Mammary epithelial cell (primary cell): ENCODE measurements at regions of chrX and their contacts with region 1.

Region 1: DNA sequence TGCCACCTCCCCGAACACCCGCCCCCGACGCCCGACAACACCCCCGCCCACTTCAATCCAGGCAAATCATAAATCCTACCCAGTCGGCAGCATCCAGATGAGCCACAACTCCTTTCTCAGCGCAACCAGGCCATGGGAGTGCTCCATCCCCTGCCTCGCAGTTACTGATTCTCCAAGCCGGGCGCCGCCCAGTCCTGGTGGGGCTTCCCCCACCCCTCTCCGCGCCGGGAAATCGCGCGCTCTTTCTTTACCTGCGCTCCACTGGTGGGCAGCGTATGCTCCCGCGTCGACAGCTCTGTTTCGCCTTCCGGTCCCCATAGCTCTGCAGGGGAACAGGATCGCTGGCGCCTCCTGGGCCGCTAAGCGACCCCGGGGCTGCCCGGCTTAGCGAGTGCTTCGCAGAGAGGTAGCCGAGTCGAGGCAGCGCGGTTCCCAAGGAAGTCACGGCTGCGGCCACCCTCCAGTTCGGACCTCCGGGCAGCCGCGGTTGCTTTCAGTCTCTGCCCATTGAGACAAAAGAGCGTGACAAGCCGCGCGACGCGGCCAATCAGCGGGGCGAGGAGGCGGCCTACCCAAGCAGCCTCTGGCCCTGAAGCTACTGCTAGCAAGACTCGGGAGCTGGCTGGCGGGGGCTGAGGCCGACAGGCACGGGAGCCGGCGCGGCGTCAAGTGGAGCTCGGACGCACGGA is 43.7 kb upstream of the TMSB15B start:
- DNase-seq: peak; percentile 66
- H3K4me3 ChIP-seq: peak overlapping the region; percentile 65 to 69 (median 66)
- H3K27ac ChIP-seq: peak overlapping the region; percentile 54
- H3K4me1 ChIP-seq: peaks cover 3% of the 10 kb centered on the region
- H3K27me3 ChIP-seq: no peaks in the 10 kb centered on the region
- CTCF ChIP-seq: no peak

Region 2: DNA sequence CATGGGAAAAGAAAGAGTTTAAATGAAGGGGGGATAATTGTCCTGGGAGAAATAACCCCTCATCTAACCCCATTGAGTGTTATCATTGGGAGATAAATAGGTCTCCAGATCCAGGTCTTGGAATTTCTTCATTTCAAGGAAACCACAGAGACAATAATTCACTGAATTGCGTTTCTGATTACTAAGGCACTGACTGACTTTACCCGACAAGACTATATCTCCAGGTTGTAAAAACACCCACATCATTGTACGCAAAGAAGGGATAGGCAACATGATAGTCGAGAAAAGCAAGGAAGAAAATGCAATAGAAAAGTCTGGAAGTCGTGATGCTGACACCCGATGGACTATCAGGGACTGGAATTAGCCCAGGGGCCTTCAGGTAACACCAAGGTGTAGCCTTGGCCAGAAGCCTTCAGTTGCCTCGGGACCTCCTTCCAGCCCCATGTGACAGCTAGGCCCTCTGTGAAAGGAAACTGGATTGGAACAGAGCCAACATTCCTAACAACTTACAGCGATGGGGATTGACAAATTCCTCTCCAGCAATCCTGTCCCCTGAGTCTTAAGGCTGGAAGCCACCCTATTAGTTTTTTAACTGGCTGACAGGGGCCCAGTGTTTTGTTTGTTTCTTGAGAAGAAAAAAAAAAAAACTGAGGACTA is 40.1 kb before region 1 on chrX:
- CTCF ChIA-PET with region 1: no interaction called
- dilution Hi-C with region 1: no loop called
- in situ Hi-C with region 1: no loop called
- intact Hi-C with region 1: loop called (anchors 2 kb)
- DNase-seq: peak; percentile 77
- H3K4me3 ChIP-seq: no peak overlapping the region
- H3K27ac ChIP-seq: no peak overlapping the region
- H3K4me1 ChIP-seq: peaks cover 12% of the 10 kb centered on the region
- H3K27me3 ChIP-seq: no peaks in the 10 kb centered on the region
- CTCF ChIP-seq: no peak

Region 3: GRCh38 chrX:103941201-103941975 is 22.7 kb after region 1 on chrX:
- CTCF ChIA-PET with region 1: no interaction called
- dilution Hi-C with region 1: no loop called
- in situ Hi-C with region 1: no loop called
- intact Hi-C with region 1: loop called (anchors 1 kb)
- DNase-seq: peak; percentile 35
- H3K4me3 ChIP-seq: no peak overlapping the region
- H3K27ac ChIP-seq: no peak overlapping the region
- H3K4me1 ChIP-seq: no peaks in the 10 kb centered on the region
- H3K27me3 ChIP-seq: no peaks in the 10 kb centered on the region
- CTCF ChIP-seq: peak; percentile 40 to 63